ENCODE measurements at regions of chr15 and their contacts with region 1.

Region 1: GRCh38 chr15:75723847-75724660 is 11.4 kb upstream of the CSPG4 start:
- DNase-seq: peak in 2 of 5 donors; percentile 16 to 55
- H3K4me3 ChIP-seq: no peak overlapping the region
- H3K4me3 Mint-ChIP-seq: no peak overlapping the region
- H3K27ac ChIP-seq: no peak overlapping the region
- H3K27ac Mint-ChIP-seq: no peak overlapping the region
- H3K4me1 ChIP-seq: no peaks in the 10 kb centered on the region
- H3K4me1 Mint-ChIP-seq: peaks cover 0 to 2% (median 0%) of the 10 kb centered on the region in 3 donors
- H3K27me3 ChIP-seq: no peaks in the 10 kb centered on the region
- H3K27me3 Mint-ChIP-seq: peaks cover 8 to 23% of the 10 kb centered on the region in 2 donors

Region 2: DNA sequence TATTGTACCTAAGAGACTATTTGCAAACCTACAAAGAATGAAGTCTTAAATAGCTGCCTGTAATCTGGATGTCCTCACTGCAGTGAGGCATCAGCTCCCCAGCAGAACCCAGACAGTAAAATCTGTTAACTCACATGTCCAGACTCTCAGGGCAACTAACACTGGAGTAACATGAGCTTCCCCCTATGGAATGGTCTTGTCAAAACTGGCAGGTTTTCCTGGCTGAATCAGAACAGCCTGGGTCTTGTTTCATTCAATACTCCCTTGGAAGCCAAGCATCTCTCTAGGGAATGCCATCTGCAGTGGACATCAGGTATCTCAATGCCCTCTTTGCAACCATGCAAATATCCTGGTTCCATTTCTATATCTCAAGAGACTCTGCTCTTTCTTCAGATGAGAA is 169.3 kb before region 1 on chr15:
- CTCF ChIA-PET with region 1: no interaction called
- POLR2A ChIA-PET with region 1: no interaction called
- DNase-seq: no peak
- H3K4me3 ChIP-seq: no peak overlapping the region
- H3K4me3 Mint-ChIP-seq: no peak overlapping the region
- H3K27ac ChIP-seq: no peak overlapping the region
- H3K27ac Mint-ChIP-seq: peak overlapping the region in 2 of 8 donors; percentile 12 to 52
- H3K4me1 ChIP-seq: no peaks in the 10 kb centered on the region
- H3K4me1 Mint-ChIP-seq: peaks cover 9 to 22% (median 22%) of the 10 kb centered on the region in 3 donors
- H3K27me3 ChIP-seq: no peaks in the 10 kb centered on the region
- H3K27me3 Mint-ChIP-seq: no peaks in the 10 kb centered on the region

Region 3: GRCh38 chr15:75801859-75802593 is 78.0 kb after region 1 on chr15:
- CTCF ChIA-PET with region 1: interaction called, 30 read pairs
- POLR2A ChIA-PET with region 1: no interaction called
- DNase-seq: peak; percentile 64 to 80 (median 67)
- H3K4me3 ChIP-seq: no peak overlapping the region
- H3K4me3 Mint-ChIP-seq: peak overlapping the region in 3 of 7 donors; percentile 60 to 68 (median 62)
- H3K27ac ChIP-seq: no peak overlapping the region
- H3K27ac Mint-ChIP-seq: peak overlapping the region in 1 of 8 donors; percentile 48
- H3K4me1 ChIP-seq: no peaks in the 10 kb centered on the region
- H3K4me1 Mint-ChIP-seq: peaks cover 3 to 10% (median 7%) of the 10 kb centered on the region in 3 donors
- H3K27me3 ChIP-seq: peaks cover 12% of the 10 kb centered on the region
- H3K27me3 Mint-ChIP-seq: peaks cover 37 to 63% of the 10 kb centered on the region in 2 donors